Caco-2 (cell line): ENCODE measurements at regions of chr6 and their contacts with region 1.

Region 1: GRCh38 chr6:121849477-121849876 is 414.0 kb downstream of the GJA1 start:
- DNase-seq: peak; percentile 69 to 83
- H3K4me3 ChIP-seq: no peak overlapping the region
- H3K4me3 Mint-ChIP-seq: no peak overlapping the region
- H3K27ac Mint-ChIP-seq: no peak overlapping the region
- H3K4me1 ChIP-seq: peaks cover 37% of the 10 kb centered on the region
- H3K4me1 Mint-ChIP-seq: peaks cover 37% of the 10 kb centered on the region
- H3K27me3 ChIP-seq: no peaks in the 10 kb centered on the region
- H3K27me3 Mint-ChIP-seq: no peaks in the 10 kb centered on the region
- CTCF ChIP-seq: peak; percentile 68 to 81

Region 2: DNA sequence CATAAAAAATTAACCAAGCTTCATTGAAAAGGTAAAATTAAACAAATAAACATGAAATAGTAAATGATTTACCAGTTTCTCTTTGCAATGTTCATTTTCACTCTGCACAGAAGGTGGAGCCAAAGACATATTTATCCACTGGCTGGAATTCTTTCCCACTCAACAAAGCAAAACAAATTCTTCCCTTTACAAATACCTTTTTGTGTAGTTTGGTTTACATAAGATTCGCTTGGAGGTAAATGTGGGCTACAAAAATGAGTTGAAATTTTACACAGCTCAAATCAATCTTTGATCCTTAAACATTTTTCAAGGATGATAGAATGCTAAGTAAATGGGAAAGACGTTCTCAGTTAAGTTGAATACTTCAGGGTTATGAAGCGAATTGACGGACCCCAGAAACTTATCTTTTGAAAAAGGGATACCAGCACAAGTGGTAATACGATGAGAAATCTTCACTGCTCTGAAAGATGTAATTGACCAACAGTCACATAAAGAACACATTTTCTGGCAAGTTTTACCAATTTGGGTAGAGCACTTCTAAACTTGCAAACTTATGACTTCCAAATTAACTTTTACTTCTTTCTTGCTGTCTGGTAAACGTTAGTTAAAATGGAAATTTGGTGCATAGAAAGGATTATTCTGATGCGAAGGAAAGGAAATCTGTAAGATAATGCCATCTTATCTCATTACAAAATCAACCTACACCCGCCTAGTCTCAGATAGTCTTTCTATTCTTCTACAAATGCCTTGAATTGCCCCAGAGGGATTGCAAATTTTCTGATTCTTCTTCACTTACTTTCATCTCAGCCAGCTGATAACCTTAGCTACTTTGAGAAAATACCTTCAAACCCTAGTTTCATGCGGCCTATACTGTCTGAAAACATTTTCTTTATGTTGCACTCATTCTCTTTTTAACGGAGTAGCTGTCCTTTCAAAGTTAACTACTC is 418.7 kb before region 1 on chr6:
- CTCF ChIA-PET with region 1: interaction called, 10 read pairs
- POLR2A ChIA-PET with region 1: no interaction called
- intact Hi-C with region 1: loop called (anchors 1 kb)
- DNase-seq: peak in 1 of 2 experiments; percentile 47
- H3K4me3 ChIP-seq: no peak overlapping the region
- H3K4me3 Mint-ChIP-seq: peak overlapping the region; percentile 9
- H3K27ac Mint-ChIP-seq: no peak overlapping the region
- H3K4me1 ChIP-seq: peaks cover 18% of the 10 kb centered on the region
- H3K4me1 Mint-ChIP-seq: peaks cover 7% of the 10 kb centered on the region
- H3K27me3 ChIP-seq: no peaks in the 10 kb centered on the region
- H3K27me3 Mint-ChIP-seq: no peaks in the 10 kb centered on the region
- CTCF ChIP-seq: peak; percentile 47 to 69

Region 3: DNA sequence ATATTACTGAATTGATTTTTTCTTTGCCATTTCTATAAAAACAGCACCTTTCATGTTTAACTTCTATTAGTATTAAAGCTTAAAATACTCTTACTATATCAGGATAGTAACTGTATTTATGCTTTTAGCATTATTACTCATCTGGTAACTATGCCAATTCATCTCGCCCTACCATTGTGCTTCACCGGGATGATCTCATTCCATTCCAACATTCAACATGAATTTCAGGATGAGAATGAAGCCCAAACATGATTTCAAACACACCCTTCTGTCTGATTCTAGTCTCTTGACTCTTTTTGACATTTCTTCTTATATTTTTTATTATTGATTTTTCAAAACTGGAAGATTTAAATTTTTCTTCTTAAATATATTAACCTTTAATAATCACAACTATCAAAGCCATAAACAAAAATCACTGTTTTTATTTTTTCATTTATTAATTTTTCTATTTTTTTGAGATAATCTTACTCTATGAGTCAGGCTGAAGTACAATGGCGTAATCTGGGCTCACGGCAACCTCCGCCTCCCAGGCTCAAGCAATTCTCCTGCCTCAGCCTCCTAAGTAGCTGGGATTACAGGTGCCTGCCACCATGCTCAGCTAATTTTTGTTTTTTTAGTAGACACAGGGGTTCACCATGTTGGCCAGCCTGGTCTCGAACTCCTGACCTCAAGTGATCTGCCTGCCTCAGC is 367.3 kb before region 1 on chr6:
- CTCF ChIA-PET with region 1: interaction called, 3 read pairs
- POLR2A ChIA-PET with region 1: no interaction called
- intact Hi-C with region 1: loop called (anchors 2 kb)
- DNase-seq: no peak
- H3K4me3 ChIP-seq: no peak overlapping the region
- H3K4me3 Mint-ChIP-seq: no peak overlapping the region
- H3K27ac Mint-ChIP-seq: no peak overlapping the region
- H3K4me1 ChIP-seq: peaks cover 10% of the 10 kb centered on the region
- H3K4me1 Mint-ChIP-seq: peaks cover 6% of the 10 kb centered on the region
- H3K27me3 ChIP-seq: no peaks in the 10 kb centered on the region
- H3K27me3 Mint-ChIP-seq: no peaks in the 10 kb centered on the region
- CTCF ChIP-seq: no peak

Region 4: GRCh38 chr6:121573481-121573880 is 276.0 kb before region 1 on chr6:
- CTCF ChIA-PET with region 1: no interaction called
- POLR2A ChIA-PET with region 1: no interaction called
- intact Hi-C with region 1: loop called (anchors 5 kb)
- DNase-seq: no peak
- H3K4me3 ChIP-seq: no peak overlapping the region
- H3K4me3 Mint-ChIP-seq: no peak overlapping the region
- H3K27ac Mint-ChIP-seq: peak overlapping the region; percentile 13
- H3K4me1 ChIP-seq: peaks cover 46% of the 10 kb centered on the region
- H3K4me1 Mint-ChIP-seq: peaks cover 20% of the 10 kb centered on the region
- H3K27me3 ChIP-seq: no peaks in the 10 kb centered on the region
- H3K27me3 Mint-ChIP-seq: no peaks in the 10 kb centered on the region
- CTCF ChIP-seq: no peak

Region 5: DNA sequence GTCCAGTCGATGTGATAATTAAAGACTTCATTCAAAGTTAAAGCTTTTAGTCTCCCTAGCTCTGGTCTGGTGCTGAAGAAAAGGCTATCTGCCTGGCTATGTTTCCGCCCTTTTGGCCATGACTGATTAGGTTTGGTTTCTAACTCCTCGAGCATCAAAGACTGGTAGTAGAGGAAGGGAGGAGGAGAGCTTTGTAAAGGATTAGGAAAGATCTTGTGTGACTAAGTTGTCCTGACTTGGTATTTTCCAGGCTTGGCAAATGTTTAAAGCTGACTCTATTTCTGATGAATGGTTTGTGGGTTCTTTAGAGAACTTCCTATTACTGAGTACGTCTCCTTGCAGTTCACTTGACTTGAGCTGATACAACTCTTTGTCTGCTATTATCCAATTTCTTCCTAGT is 101.1 kb before region 1 on chr6:
- CTCF ChIA-PET with region 1: no interaction called
- POLR2A ChIA-PET with region 1: no interaction called
- intact Hi-C with region 1: loop called (anchors 5 kb)
- DNase-seq: no peak
- H3K4me3 ChIP-seq: no peak overlapping the region
- H3K4me3 Mint-ChIP-seq: no peak overlapping the region
- H3K27ac Mint-ChIP-seq: no peak overlapping the region
- H3K4me1 ChIP-seq: no peaks in the 10 kb centered on the region
- H3K4me1 Mint-ChIP-seq: no peaks in the 10 kb centered on the region
- H3K27me3 ChIP-seq: no peaks in the 10 kb centered on the region
- H3K27me3 Mint-ChIP-seq: no peaks in the 10 kb centered on the region
- CTCF ChIP-seq: no peak

Region 6: GRCh38 chr6:121830736-121831135 is 18.7 kb before region 1 on chr6:
- CTCF ChIA-PET with region 1: no interaction called
- POLR2A ChIA-PET with region 1: no interaction called
- intact Hi-C with region 1: no loop called
- DNase-seq: no peak
- H3K4me3 ChIP-seq: no peak overlapping the region
- H3K4me3 Mint-ChIP-seq: no peak overlapping the region
- H3K27ac Mint-ChIP-seq: no peak overlapping the region
- H3K4me1 ChIP-seq: no peaks in the 10 kb centered on the region
- H3K4me1 Mint-ChIP-seq: peaks cover 7% of the 10 kb centered on the region
- H3K27me3 ChIP-seq: no peaks in the 10 kb centered on the region
- H3K27me3 Mint-ChIP-seq: no peaks in the 10 kb centered on the region
- CTCF ChIP-seq: no peak

Region 7: DNA sequence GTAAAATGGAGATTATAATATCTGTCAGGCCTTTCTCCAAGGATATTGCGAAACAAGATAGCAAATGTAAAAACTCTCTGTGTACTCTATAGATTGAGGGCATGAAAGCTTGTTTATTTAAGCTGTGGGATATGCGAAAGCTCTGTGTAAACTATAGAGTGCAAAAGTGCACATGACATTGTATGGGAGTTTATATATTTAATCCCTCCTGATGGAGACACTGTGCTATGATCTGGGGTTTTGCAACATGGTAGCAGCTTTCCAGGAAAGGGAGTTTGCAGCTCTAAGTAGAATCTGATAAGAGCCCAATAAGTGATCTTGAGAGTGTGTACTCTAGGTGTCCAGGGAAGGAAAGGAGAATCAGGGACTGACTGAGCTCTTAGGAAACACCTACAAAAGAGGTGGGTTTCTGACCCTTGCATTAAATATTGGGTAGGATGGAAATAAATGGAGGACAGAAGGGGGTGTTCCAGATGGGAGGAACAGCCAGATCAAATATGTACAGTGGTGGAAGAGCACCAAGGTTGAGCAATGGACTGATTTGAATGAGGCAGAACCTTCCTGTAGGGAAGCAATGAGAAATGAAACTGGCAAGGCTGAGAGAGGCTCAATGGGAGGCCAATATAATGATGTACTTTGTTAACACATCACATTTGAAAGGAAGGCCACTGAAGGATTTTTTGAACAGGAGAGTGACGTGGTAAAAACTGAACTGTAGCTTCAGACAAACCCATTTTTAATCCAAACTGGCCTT is 36.1 kb after region 1 on chr6:
- CTCF ChIA-PET with region 1: no interaction called
- POLR2A ChIA-PET with region 1: no interaction called
- intact Hi-C with region 1: loop called (anchors 1 kb)
- DNase-seq: peak; percentile 68 to 76
- H3K4me3 ChIP-seq: no peak overlapping the region
- H3K4me3 Mint-ChIP-seq: peak overlapping the region; percentile 21
- H3K27ac Mint-ChIP-seq: no peak overlapping the region
- H3K4me1 ChIP-seq: peaks cover 25% of the 10 kb centered on the region
- H3K4me1 Mint-ChIP-seq: peaks cover 13% of the 10 kb centered on the region
- H3K27me3 ChIP-seq: no peaks in the 10 kb centered on the region; the same call in 1 of the 2 replicates
- H3K27me3 Mint-ChIP-seq: no peaks in the 10 kb centered on the region
- CTCF ChIP-seq: no peak

Region 8: DNA sequence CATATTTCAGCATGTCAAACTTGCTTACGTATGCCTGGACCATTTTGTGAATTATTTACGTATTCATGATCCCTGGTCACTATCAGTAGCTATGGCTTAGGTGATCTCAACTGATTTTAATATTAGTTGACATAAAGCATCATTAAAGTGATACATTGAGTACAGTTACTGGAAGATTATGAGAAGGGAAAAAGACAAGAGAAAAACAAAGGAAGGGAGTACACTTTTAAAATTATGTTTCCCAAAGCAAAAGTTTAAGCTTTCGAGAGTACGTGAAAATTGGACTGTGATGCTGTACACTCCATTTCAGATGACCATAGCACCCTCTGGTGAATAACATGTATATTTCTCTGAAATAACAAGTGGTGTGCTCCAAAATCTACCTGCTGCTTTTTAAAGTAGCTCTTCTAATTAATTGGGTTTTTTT is 334.9 kb after region 1 on chr6:
- CTCF ChIA-PET with region 1: no interaction called
- POLR2A ChIA-PET with region 1: no interaction called
- intact Hi-C with region 1: loop called (anchors 5 kb)
- DNase-seq: peak in 1 of 2 experiments; percentile 6
- H3K4me3 ChIP-seq: no peak overlapping the region
- H3K4me3 Mint-ChIP-seq: no peak overlapping the region
- H3K27ac Mint-ChIP-seq: no peak overlapping the region
- H3K4me1 ChIP-seq: no peaks in the 10 kb centered on the region
- H3K4me1 Mint-ChIP-seq: no peaks in the 10 kb centered on the region
- H3K27me3 ChIP-seq: no peaks in the 10 kb centered on the region
- H3K27me3 Mint-ChIP-seq: peaks cover 7% of the 10 kb centered on the region
- CTCF ChIP-seq: peak in 1 of 2 experiments; percentile 26